ENCODE measurements at regions of chr19 and their contacts with region 1.

Region 1: DNA sequence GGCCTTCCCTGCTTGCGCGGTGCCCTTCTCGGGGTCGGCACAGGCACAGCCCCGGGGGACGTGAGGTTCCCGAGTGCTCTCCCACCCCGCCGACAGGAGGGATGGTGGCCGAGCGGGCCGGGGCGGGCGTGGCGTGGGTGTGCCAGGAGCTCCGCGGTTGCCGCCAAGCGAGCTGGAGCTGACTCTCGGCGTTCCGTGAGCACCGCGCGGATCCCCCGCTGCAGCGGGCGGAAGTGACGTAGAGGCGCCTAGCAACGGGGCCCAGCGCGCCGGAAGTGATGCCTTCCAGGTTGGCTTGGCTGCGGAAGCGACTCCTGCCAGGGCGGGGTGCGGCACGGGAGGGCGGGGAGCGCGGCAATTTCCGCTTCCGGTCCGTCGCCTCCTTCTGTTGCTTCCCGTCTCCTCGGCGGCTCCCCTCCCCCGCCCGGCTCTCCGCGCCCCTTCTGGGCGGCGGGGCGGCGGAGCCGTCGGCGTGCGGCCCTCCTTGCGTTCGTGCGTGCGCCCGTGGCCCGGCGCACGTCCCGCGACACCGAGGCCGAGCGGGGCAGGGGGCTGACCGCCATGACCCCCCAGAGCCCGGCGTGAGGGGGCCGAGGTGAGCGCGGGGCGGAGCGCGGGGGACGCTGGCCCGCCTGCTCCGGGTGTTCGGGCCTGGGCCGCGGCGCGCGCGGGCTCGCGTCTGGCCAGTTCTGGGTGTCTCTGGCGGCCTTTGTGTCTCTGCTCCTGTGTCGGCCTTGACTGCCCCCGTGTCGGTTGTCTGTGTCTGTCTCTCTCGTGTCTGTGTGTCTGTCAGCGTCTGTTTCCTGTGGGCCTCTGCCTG is at the start of gene EPN1:
- DNase-seq: peak; percentile 99
- ATAC-seq: peak; percentile 91
- H3K4me3 Mint-ChIP-seq: peak within 1 kb of the TSS; percentile 95
- H3K27ac Mint-ChIP-seq: peak within 1 kb of the TSS; percentile 96
- H3K4me1 Mint-ChIP-seq: peaks cover 63% of the 10 kb centered on the region
- H3K27me3 Mint-ChIP-seq: no peaks in the 10 kb centered on the region
- total RNA-seq, gene EPN1: 32.5 to 37.1 TPM

Region 2: GRCh38 chr19:55516878-55517620 is 158.0 kb before region 1 on chr19:
- CTCF ChIA-PET with region 1: no interaction called
- POLR2A ChIA-PET with region 1: no interaction called
- intact Hi-C with region 1: loop called in 1 of 2 experiments (anchors 1 kb)
- DNase-seq: peak; percentile 96
- ATAC-seq: peak; percentile 100
- H3K4me3 Mint-ChIP-seq: peak overlapping the region; percentile 54
- H3K27ac Mint-ChIP-seq: peak overlapping the region; percentile 9
- H3K4me1 Mint-ChIP-seq: peaks cover 3% of the 10 kb centered on the region
- H3K27me3 Mint-ChIP-seq: no peaks in the 10 kb centered on the region

Region 3: DNA sequence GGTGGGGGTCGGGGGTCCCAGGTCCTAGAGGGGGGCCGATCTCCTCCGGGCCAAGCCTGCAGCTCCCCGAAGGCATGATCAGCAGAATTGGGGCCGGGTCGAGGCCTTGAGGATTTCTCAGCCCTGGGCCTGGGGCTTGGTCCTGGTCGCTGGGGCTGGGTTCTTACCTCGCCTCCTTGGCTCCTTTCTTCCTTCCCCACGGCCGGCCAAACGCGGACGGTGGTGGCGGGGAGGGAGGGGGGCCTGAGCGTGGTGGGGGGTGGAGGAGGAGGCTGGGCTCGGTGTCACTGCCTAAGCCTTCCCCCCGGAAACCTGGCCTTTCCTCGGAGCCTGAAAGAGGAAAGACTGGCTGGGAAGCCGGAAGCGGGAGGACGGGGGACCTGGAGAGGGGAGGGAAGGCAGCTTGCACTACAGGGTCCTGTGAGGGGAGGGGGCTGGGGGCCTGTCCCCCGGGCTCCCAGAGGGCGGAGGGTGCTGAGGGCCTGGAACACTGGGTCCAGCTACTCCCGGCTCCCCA is 94.4 kb before region 1 on chr19 and contains the start of gene ZNF579:
- CTCF ChIA-PET with region 1: no interaction called
- POLR2A ChIA-PET with region 1: no interaction called
- intact Hi-C with region 1: loop called in 1 of 2 experiments (anchors 1 kb)
- DNase-seq: peak; percentile 89
- ATAC-seq: peak; percentile 79
- H3K4me3 Mint-ChIP-seq: peak within 1 kb of the TSS; percentile 83
- H3K27ac Mint-ChIP-seq: peak within 1 kb of the TSS; percentile 78
- H3K4me1 Mint-ChIP-seq: peaks cover 23% of the 10 kb centered on the region
- H3K27me3 Mint-ChIP-seq: no peaks in the 10 kb centered on the region
- total RNA-seq, gene ZNF579: 7.2 to 7.5 TPM

Region 4: DNA sequence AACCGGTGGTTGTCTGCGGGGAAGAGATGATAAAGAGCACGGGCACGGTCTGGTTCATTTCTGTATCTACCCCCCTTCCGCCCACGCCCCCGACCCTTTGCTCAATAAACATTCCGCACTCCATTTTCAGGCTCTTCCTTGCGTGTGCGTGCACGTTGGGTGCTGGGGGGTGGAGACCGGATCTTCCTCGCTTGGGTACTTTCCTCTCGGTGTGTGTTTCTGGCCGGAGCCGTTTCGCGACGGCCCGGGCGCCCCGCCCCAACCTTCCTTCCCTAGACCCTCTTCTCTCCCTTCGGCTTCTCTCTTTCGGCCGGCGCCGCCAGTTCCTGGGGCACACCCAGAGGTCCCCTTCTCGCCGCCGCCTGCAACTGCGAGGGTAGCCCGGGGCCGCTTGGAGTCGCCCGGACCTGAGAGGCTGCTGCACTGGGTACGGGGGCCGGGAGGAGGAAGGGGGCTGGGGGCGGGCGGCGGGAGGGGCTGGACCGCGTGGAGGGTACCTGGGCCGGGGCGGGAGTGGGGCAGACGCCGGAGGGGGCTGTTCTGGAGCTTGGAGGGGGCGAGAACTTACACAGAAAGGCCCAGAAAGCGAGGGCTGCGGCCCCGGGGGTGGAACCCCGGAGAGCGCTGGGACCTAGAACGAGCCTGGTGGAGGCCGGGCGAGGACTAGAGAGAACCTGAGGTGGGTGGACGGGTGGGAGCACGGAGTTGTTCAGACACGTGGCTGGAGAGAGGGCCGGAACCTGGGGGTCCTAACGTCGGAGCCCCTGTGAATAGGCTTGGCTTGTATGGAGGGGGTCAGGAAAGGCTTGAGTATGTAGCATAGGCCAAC is 31.5 kb before region 1 on chr19 and contains the start of gene ZNF581:
- CTCF ChIA-PET with region 1: interaction called, 3 read pairs
- POLR2A ChIA-PET with region 1: no interaction called
- intact Hi-C with region 1: loop called in 1 of 2 experiments (anchors 1 kb)
- DNase-seq: peak; percentile 91
- ATAC-seq: peak; percentile 55
- H3K4me3 Mint-ChIP-seq: peak within 1 kb of the TSS; percentile 93
- H3K27ac Mint-ChIP-seq: peak within 1 kb of the TSS; percentile 99
- H3K4me1 Mint-ChIP-seq: peaks cover 44% of the 10 kb centered on the region
- H3K27me3 Mint-ChIP-seq: no peaks in the 10 kb centered on the region
- total RNA-seq, gene ZNF581: 18.9 to 26.9 TPM

Region 5: DNA sequence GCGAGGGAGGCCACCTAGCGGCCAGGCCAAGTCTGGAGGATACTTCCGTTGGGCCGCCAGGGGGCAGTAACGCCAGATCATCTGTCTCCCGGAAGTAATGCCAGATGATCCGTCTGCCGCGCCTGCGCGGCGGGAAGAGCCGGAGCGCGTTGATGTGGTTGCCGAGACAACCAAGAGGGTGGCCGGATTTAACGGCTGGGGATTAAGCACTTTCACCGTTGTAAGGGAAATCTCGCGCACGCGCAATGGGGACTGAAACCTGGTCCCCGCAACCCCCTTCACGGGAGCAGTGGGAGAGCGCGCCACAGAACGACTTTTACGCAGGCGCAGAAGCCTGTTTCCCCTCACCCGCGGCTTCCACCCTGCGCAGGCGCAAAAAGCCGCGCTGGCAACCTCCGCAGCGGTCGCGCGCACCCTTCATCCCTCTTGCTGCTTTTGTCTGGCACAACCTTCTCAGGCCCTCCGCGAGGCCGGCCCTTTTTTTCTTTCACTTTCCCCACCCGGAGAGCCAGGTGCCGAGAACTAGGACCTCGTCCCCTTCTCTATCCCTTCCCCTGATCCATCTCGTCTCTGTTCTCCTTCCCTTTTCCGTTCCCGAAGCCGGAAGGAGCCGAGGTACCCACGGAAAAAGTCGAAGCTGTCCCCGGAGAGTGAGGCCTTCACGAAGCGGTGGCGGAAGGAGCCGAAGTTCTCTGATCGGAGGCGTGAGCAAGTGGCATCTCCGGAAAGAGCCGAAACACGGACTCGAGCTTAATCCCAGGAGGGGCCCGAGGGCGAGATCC is 21.1 kb before region 1 on chr19:
- CTCF ChIA-PET with region 1: interaction called, 19 read pairs
- POLR2A ChIA-PET with region 1: interaction called, 14 read pairs
- intact Hi-C with region 1: loop called (anchors 1 kb)
- DNase-seq: peak; percentile 99
- ATAC-seq: peak; percentile 84
- H3K4me3 Mint-ChIP-seq: peak overlapping the region; percentile 86
- H3K27ac Mint-ChIP-seq: peak overlapping the region; percentile 98
- H3K4me1 Mint-ChIP-seq: peaks cover 37% of the 10 kb centered on the region
- H3K27me3 Mint-ChIP-seq: no peaks in the 10 kb centered on the region

Region 6: DNA sequence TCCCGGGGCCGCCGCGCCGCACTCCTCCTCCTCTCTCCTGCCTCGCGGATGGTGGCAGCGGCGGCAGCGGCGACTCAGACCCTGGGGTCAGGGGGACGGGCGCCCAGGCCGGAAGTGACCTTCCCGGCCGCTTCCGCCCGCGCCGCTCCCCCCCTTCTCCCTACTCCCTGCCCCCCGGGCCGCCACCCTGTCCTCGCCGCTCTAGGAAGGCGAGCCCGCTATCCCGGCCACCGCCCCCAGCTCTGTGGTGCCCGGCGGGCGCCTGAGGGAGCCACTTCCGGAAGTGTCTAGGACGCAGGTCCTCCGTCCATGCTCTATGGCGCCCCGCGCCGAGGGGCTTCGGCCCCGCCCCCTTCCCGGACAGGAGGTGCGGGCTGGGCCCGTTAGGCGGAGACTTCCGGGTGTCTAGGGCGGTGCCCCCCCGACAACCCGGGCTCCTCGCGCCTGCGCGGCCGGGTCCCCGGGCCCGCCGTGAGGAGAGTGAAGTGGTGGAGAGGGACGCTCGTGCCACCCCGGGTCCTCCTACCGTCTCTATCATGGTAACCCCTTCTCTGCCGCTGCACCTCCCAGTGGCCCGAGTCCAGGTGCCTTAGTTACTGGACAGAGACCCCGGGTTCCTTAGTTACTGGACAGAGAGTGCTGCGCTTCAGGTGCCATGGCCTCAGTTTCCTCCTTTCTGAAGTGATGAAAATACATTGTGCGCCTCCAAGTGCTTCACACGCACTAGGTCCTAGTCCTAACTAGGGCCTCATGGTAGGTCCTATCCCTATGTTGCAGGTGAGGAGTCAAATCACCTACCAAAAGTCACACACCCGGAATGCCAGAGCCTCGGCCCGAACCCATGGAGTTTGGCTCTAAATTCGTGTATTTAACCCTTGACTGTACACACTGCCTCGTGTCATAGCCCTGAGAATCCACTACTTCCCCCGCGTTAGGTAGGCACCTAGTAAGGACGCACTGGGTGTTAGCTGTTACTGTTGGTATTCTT is 446.4 kb after region 1 on chr19 and contains the start of gene ZNF787:
- CTCF ChIA-PET with region 1: no interaction called
- POLR2A ChIA-PET with region 1: no interaction called
- intact Hi-C with region 1: loop called in 1 of 2 experiments (anchors 1 kb)
- DNase-seq: peak; percentile 98
- ATAC-seq: peak; percentile 92
- H3K4me3 Mint-ChIP-seq: peak within 1 kb of the TSS; percentile 82
- H3K27ac Mint-ChIP-seq: peak within 1 kb of the TSS; percentile 91
- H3K4me1 Mint-ChIP-seq: peaks cover 48% of the 10 kb centered on the region
- H3K27me3 Mint-ChIP-seq: no peaks in the 10 kb centered on the region
- total RNA-seq, gene ZNF787: 27.6 to 28.4 TPM

Region 7: DNA sequence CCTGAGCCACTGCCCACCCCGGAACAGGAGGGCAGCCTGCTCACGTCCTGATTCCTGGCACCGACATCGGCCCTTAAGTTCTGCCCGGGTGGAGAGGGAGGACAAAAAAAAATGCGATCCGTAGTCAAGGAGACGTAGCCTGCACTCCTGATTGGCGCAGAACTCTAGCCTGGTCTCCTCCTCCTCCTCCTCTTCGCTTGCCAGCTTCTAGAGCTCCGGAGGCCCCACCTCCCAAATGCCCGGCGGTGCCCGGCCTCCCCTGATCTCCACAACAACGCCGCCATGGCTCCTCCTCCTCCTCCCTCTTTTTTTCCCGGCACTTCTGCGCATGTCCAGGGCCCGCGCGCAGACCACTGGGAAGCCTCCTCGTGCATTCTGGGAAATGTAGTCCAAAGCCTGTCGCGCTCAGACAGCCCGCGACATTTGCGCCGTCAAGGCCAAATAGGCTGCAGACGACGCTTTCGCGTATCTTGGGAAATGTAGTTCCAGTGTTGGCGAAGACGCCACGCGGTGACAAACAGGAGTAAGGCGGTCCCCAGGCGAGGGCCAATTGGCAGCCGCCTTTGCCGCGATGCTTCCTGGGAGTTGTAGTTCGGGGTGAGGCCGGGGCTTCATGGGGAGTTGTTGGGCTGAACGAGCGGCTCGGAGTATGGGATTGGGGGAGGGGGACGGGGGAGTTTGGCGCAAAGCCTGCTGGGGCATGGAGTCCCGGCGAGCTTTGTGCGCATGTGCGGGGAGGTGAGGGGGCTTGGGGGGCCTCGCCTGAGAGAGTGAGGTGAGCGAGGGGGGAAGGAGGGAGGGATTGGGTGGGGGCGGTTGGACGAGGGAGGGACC is 465.7 kb after region 1 on chr19 and contains the start of gene ZNF444:
- CTCF ChIA-PET with region 1: no interaction called
- POLR2A ChIA-PET with region 1: no interaction called
- intact Hi-C with region 1: loop called in 1 of 2 experiments (anchors 1 kb)
- DNase-seq: peak; percentile 99
- ATAC-seq: peak; percentile 90
- H3K4me3 Mint-ChIP-seq: peak within 1 kb of the TSS; percentile 89
- H3K27ac Mint-ChIP-seq: peak within 1 kb of the TSS; percentile 94
- H3K4me1 Mint-ChIP-seq: peaks cover 31% of the 10 kb centered on the region
- H3K27me3 Mint-ChIP-seq: no peaks in the 10 kb centered on the region
- total RNA-seq, gene ZNF444: 29.2 to 32.2 TPM

Measured in activated CD4-positive, alpha-beta T cell treated with anti-CD3 and anti-CD28 coated beads for 36 hours (primary cell).